Right ventricle myocardium inferior (tissue), 1 donor: ENCODE measurements at regions of chr17 and their contacts with region 1.

Region 1: DNA sequence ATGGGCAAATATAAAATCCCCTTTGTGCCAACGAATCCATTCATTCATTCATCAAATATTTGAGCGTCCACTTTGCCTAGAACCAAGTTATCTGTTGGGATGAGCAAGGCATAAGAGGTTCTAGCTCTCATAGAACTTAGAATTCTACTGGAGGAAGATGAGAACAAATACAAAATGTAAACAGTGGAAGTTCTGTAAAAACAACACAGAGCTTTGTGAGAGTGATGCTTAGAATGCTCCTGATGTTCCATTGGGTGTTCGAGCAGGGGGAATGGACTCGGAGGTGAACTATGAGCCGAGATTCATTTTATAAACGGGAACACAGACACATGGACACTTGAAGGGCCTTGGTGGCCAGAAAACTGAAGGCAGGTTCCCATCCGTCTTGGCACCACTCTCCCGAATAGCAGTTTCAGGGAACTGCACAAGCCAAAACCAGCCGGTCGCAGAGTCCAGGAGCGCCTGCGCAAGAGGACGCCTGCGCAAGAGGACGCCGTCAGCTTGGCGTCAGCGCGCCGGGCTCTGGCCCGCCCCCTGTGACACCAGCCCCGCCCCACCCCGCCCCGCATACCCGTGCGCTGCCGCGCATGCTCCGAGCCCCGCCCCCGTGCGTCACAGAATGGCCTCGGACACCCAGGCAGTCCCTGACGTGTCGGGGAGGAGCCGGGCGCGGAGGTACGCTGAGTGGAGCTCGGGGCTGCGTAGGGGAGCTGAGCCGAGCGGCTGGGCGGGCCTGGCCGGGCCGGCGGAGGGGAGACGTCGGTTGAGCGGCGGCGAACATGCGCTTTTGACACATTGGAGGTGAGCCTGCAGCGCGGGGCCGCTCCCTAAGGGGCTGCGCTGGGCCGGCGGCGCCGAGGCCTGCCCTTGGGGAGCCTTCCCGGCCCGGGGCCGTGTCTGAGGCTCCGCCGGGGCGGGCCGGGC is at the start of gene NDEL1:
- DNase-seq: peak; percentile 100
- ATAC-seq: peak; percentile 98
- total RNA-seq, gene NDEL1: 29.2 TPM

Region 2: DNA sequence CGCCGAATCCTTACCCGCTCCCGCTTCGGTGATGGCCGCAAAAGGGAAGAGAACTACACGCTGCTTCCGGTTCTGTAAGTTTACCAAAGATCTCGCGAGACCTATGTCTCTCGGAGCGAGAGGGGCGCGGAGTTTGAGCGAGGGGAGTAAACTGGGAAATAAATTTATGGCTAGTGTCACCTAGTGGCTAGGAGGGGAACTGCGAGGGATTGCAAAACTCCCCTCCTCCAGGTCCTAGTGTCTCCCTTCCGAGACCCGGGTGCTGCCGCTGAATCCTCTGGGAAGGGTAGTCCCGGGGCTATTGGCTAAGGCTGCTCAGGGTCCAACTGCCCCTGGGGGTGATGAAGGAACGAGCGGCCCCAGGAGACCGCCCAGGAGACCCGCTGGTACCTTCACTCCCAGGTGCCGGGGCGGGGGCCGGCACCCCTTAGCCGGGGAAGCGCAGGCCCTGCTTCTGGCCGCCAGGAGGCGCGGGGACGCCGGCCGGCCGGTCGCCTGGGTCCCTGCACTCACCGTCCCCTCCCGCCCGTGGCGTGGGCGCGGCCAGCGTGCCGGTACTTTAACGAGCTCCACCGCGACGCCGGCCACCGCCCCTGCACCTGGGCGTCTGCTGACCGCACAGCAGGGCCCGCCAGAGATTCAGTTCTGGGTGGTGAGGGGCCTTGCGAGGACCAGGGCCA is 52.2 kb before region 1 on chr17 and contains the start of gene RPL26:
- intact Hi-C with region 1: loop called (anchors 2 kb)
- DNase-seq: peak; percentile 96
- ATAC-seq: peak; percentile 93
- total RNA-seq, gene RPL26: 1,104 TPM